Gastrocnemius medialis (tissue), 4 donors: ENCODE measurements at regions of chr2 and their contacts with region 1.

Region 1: GRCh38 chr2:28894470-28895177 is at the start of gene WDR43:
- DNase-seq: peak; percentile 96 to 97
- ATAC-seq: peak; percentile 89 to 91
- H3K4me3 ChIP-seq: peak within 1 kb of the TSS; percentile 78 to 99 (median 88)
- H3K27ac ChIP-seq: peak within 1 kb of the TSS; percentile 88 to 94 (median 91)
- H3K4me1 ChIP-seq: peaks cover 30 to 41% of the 10 kb centered on the region in 2 donors
- H3K27me3 ChIP-seq: no peaks in the 10 kb centered on the region
- CTCF ChIP-seq: no peak
- POLR2A ChIP-seq: peak; percentile 94 to 95
- total RNA-seq, gene WDR43: 73.5 to 105 (median 81.1) TPM

Region 2: DNA sequence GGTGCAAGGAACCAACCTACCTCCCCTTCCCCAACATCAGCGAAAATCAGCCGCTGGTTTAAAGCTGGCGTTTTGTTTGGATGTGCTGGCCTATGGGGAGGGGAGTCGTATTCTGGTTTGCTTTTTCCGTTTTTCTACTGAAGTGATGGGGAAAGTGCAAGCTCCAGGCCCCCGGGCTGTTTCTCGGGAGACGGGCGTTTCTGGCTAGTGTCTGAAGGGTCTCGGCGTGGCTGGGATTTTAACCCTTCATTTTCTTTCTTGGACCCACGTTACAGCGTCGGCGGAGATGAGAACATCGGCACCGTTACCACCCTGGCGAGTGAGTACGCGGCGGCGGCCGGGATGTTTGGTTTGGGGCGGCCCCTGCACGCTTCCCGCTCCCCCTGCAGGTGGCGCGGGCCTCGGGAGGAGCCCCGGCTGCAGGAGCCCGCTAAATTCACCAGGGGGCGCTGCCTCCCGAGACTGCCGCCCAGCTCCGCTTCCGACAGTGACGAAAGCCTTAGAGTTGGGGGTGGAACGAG is 328.0 kb before region 1 on chr2:
- in situ Hi-C with region 1: loop called in 1 of 4 experiments (anchors 25 kb)
- intact Hi-C with region 1: loop called (anchors 10 kb)
- DNase-seq: peak; percentile 67 to 78
- ATAC-seq: peak; percentile 81 to 90
- H3K4me3 ChIP-seq: peak overlapping the region; percentile 56 to 78 (median 67)
- H3K27ac ChIP-seq: peak overlapping the region; percentile 80 to 89 (median 85)
- H3K4me1 ChIP-seq: peaks cover 16 to 19% of the 10 kb centered on the region in 2 donors
- H3K27me3 ChIP-seq: no peaks in the 10 kb centered on the region
- CTCF ChIP-seq: peak in 4 of 5 experiments; percentile 100
- POLR2A ChIP-seq: no peak

Region 3: DNA sequence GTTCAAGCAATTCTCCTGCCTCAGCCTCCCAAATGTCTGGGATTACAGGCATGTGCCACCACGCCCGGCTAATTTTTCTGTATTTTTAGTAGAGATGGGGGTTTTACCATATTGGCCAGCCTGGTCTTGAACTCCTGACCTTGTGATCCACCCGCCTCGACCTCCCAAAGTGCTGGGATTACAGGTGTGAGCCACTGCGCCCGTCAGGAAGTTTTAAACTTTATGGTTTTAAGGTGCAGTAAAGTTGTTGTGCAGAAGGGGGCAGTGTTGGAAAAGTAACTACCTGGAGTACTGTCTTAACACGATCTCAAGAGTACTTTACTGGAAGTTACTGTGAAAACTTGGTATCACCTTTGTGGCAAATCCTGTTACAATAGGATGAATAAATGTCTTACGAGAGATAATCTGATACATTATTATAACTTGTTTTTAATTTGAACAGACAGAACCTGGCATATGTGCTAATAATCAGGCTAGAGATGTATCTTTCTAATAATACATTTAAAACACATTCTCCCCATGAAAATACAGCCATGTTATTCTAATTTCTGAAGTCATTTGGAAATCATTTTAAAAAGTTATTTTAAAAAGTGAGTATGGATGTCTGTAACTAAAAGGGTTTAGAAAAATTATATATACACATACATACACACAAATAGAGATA is 73.2 kb before region 1 on chr2:
- in situ Hi-C with region 1: no loop called
- intact Hi-C with region 1: loop called (anchors 2 kb)
- DNase-seq: peak; percentile 12 to 28
- ATAC-seq: peak; percentile 70 to 94
- H3K4me3 ChIP-seq: no peak overlapping the region
- H3K27ac ChIP-seq: no peak overlapping the region
- H3K4me1 ChIP-seq: no peaks in the 10 kb centered on the region
- H3K27me3 ChIP-seq: no peaks in the 10 kb centered on the region
- CTCF ChIP-seq: peak; percentile 67 to 80 (median 74)
- POLR2A ChIP-seq: no peak

Region 4: DNA sequence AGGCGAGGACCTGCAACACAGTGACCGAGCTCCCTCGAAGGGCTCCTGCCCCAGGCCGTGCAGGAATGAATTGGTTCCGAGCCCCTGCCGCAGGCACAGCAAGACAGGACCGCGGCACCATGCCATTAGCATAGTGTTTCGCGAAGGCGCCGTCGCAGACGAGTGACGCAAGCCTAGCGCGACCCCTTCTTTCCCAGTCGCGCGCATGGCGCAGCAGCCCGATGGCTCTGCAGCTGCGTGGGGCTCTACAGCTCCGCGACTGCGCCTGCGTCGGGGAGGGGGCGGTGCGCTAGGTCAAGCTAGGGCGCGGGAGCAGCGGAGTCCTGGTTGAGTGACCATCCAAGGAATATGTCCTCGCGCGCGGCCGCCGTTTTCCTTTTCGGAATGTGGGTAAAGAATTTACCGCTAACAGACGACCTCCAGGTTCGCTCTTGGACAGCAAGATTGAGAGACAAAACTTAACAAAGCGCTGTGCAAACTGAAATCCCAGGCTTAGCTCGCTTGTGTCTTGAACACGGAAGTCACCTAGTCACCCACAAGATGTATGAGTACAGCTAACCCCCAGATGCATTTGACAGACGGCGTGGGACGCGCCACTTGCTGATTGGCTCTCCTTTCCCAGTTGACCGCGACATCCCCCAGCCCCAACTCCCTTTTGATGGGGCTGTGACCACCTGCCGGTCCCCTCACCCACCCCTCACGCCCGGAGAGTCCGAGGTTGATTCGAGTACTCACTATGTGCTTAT is 24.3 kb before region 1 on chr2 and contains the start of gene TRMT61B:
- in situ Hi-C with region 1: no loop called
- intact Hi-C with region 1: loop called (anchors 1 kb)
- DNase-seq: peak; percentile 89 to 95
- ATAC-seq: peak; percentile 93 to 94
- H3K4me3 ChIP-seq: peak within 1 kb of the TSS; percentile 82 to 89 (median 84)
- H3K27ac ChIP-seq: peak within 1 kb of the TSS; percentile 79 to 92 (median 83)
- H3K4me1 ChIP-seq: peaks cover 21 to 33% of the 10 kb centered on the region in 2 donors
- H3K27me3 ChIP-seq: no peaks in the 10 kb centered on the region
- CTCF ChIP-seq: peak in 2 of 5 experiments; percentile 21 to 24
- POLR2A ChIP-seq: peak; percentile 47 to 54
- total RNA-seq, gene TRMT61B: 5.8 to 15.2 (median 13.5) TPM

Region 5: DNA sequence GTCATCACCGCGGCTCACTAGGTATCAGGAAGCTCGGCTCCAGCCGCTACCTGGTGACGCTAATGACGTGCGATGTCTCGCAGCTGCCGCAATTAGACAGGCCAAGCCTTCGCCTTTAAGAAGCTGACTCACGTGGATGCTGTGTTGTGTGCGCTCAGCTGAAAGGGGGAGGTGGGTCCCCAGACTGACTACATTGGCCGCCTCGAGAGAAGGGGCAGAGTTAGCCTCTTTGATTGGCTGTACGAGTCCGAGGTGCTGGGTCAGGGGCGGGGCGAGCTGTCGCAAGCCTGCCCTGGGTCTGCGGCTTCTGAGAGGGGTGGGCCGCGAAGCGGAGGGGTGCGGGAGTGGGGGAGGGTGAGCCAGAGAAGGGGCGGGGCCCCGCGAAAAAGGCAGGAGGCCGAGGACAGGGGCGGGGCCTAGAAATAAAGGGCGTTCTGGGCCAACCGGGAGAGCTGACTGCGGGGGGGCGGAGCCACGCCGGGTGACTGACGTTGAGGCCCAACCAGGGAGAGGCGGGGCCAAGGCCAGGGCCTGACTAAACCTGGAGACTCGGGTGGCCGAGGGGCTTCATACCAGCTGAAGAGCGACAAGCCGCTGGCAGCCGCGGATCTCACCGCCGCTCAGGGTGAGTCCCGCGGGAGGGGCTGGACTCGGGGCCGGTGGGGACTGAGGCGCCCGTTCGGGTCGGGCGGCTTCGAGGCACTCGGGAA is 1252.0 kb after region 1 on chr2 and contains the start of gene YPEL5:
- in situ Hi-C with region 1: no loop called
- intact Hi-C with region 1: loop called (anchors 10 kb)
- DNase-seq: peak; percentile 100
- ATAC-seq: peak; percentile 91 to 93
- H3K4me3 ChIP-seq: peak within 1 kb of the TSS; percentile 86 to 97 (median 92)
- H3K27ac ChIP-seq: peak within 1 kb of the TSS; percentile 94 to 100 (median 100)
- H3K4me1 ChIP-seq: peaks cover 34 to 40% of the 10 kb centered on the region in 2 donors
- H3K27me3 ChIP-seq: no peaks in the 10 kb centered on the region
- CTCF ChIP-seq: peak in 1 of 5 experiments; percentile 3
- POLR2A ChIP-seq: peak; percentile 96 to 98
- total RNA-seq, gene YPEL5: 31.4 to 76.7 (median 53.9) TPM